ENCODE measurements at regions of chr16 and their contacts with region 1.

Region 1: DNA sequence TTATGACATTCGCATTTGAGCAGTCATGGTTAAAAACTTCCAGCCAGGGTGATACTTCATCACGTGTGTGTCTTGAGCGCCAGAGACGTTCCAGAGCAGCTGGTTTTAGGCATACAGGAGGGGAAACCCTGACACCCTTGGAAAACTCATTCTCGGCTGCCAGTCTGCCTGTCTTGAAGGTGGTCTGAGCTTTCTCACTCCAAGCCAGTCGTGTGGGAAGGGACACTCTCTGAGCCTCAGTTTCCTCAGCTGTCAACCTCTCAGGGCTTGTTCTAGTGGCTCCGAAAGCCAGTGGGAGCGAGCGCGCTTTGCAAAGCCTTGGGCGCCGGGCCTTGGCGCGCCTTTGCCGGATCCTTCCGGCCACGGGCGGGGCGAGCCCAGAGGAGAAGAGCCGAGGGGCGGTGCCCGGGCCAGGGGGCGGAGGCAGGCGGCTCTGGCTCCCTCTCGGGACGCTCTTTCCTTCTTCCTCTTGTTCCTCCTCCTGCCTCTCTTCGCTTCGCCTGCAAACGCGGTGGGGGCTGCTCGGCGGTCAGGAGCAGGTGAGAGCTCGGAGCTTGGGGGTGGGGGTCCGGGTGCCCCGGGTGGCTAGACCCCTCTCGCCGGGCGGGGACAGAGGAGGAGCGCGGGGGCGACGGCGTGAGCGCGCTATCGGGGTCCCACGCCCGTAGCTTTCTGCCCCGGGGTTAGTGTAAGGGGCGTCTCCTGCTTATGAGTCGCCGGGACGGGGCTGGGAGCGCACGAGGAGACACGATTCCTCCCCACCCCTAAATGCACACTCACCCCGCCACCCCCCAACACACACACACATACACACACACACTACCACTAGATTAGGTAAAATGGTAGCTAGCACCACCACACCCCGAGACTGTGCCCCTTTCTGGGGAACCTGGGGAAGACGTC is at the start of gene LDAF1:
- DNase-seq: peak; percentile 93
- CTCF ChIP-seq: no peak

Region 2: GRCh38 chr16:20866145-20866772 is 292.2 kb before region 1 on chr16:
- CTCF ChIA-PET with region 1: no interaction called
- POLR2A ChIA-PET with region 1: no interaction called
- DNase-seq: no peak
- CTCF ChIP-seq: no peak

Region 3: DNA sequence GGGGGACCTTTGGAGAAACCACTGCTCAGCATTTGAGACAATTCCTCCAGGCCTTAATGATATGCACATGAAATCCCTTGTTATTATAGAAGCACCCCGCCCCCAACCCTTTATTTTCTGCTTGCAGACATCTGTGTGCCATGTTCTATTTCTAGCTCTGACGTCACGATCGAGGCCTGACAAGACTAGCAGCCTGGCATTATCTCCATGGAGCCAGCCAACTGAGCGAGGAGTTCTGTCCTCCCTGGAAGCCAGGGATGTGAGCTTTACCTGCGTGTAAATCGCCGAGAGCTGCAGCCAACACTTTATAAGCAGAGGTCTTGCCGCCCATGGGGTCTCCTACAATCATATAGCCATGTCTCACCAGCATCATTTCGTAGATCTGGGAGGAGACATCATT is 124.8 kb before region 1 on chr16:
- CTCF ChIA-PET with region 1: no interaction called
- POLR2A ChIA-PET with region 1: no interaction called
- DNase-seq: no peak
- CTCF ChIP-seq: no peak

Region 4: DNA sequence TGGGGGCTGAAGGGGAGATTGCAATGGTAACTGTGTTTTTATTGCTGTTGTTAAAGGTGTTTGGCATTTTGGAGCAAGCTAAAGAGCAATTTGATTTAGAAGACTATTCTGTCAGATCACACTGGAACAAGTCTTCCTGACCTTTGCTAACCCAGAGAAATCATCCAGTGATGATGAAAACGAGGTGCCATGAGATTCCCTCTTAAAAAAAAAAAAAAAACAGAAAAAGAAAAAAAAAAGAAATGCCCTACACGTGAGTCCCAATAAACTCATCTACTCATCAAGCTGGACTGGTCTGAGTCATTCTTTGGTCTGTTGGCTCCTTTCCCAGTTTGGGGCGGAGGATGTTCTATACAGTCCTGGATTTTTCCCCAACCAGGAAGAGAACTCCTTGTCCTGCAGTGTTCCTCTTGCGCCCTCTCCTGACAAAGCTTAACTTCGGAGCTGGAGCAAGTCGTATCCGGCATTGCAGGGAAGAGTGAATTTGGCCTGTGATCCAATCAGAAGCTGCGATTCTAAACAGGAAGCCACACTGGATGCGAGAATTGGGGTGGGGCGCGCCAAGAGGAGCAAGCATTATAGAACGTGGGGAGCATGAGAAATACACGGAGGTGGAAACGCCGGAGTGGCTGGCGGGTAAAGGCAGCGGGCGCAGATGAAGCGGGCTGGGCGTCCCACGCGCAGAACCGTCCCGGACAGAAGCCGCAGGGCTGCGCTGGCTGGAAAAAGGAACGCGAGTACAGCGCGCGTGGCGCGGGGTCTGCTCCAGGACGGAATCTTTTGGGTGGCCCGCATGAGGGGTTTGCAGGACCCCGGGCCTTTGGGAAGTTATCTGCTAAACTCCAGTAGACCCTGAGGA is 142.1 kb after region 1 on chr16:
- CTCF ChIA-PET with region 1: interaction called, 16 read pairs
- POLR2A ChIA-PET with region 1: no interaction called
- DNase-seq: peak; percentile 83
- CTCF ChIP-seq: peak; percentile 74

Measured in GM10248 (cell line).